MCF 10A (cell line): ENCODE measurements at regions of chr9 and their contacts with region 1.

Region 1: DNA sequence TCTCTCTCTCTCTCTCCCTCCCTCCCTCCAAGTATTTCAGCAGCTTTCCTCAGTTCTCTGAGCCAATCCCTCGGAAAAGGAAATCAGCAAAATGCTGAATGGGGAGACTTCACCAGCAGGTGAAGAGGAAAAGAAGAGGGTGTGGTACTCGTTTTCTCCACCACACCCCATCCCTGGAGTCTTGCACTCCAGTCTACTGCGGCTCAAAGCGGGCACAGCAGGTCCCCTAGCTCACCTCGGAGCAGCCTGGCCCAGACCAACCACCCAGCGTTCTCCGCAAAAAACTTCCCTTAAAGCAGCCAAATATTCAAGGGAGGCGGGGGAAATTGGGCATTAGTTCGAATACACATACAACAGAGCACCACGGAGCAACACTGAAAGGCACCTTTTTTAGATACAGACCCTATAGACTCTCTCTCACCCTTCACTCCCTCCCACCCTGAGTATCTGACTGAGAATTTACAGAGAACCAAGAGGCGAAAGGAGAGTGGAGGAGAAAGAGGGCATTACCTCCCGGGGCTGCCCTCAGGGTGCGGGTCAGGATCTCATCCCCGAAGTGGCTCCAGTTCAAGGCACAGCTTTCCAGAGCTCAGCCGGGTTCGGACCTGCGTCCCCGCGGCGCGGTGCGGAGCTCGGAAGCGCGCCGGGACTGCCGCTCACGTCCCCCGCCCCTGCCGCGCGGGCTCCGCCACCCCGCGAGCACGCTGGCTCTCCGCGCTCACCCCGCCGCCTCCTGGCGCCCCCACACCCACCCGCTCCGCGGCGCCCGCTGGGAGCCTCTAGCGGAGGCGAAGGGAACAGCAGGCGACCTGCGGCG is 1638.5 kb upstream of the C9orf72 start:
- DNase-seq: peak; percentile 63
- H3K4me3 Mint-ChIP-seq: peak overlapping the region; percentile 86
- H3K27ac Mint-ChIP-seq: no peak overlapping the region
- H3K4me1 Mint-ChIP-seq: peaks cover 13% of the 10 kb centered on the region
- H3K27me3 Mint-ChIP-seq: no peaks in the 10 kb centered on the region
- CTCF ChIP-seq: peak; percentile 94

Region 2: GRCh38 chr9:28073270-28073669 is 1138.5 kb before region 1 on chr9:
- CTCF ChIA-PET with region 1: interaction called, 5 read pairs
- POLR2A ChIA-PET with region 1: no interaction called
- intact Hi-C with region 1: loop called (anchors 10 kb)
- DNase-seq: peak; percentile 65
- H3K4me3 Mint-ChIP-seq: no peak overlapping the region
- H3K27ac Mint-ChIP-seq: no peak overlapping the region
- H3K4me1 Mint-ChIP-seq: no peaks in the 10 kb centered on the region
- H3K27me3 Mint-ChIP-seq: peaks cover 17% of the 10 kb centered on the region
- CTCF ChIP-seq: peak; percentile 75

Region 3: GRCh38 chr9:28600226-28600625 is 611.6 kb before region 1 on chr9:
- CTCF ChIA-PET with region 1: no interaction called
- POLR2A ChIA-PET with region 1: no interaction called
- intact Hi-C with region 1: loop called (anchors 10 kb)
- DNase-seq: no peak
- H3K4me3 Mint-ChIP-seq: no peak overlapping the region
- H3K27ac Mint-ChIP-seq: no peak overlapping the region
- H3K4me1 Mint-ChIP-seq: no peaks in the 10 kb centered on the region
- H3K27me3 Mint-ChIP-seq: no peaks in the 10 kb centered on the region
- CTCF ChIP-seq: no peak

Region 4: GRCh38 chr9:28774416-28775235 is 437.2 kb before region 1 on chr9:
- CTCF ChIA-PET with region 1: interaction called, 34 read pairs
- POLR2A ChIA-PET with region 1: interaction called, 9 read pairs
- intact Hi-C with region 1: loop called (anchors 1 kb)
- DNase-seq: peak; percentile 54
- H3K4me3 Mint-ChIP-seq: no peak overlapping the region
- H3K27ac Mint-ChIP-seq: no peak overlapping the region
- H3K4me1 Mint-ChIP-seq: peaks cover 6% of the 10 kb centered on the region
- H3K27me3 Mint-ChIP-seq: no peaks in the 10 kb centered on the region
- CTCF ChIP-seq: peak; percentile 61

Region 5: GRCh38 chr9:28853477-28853876 is 358.3 kb before region 1 on chr9:
- CTCF ChIA-PET with region 1: no interaction called
- POLR2A ChIA-PET with region 1: no interaction called
- intact Hi-C with region 1: no loop called
- DNase-seq: no peak
- H3K4me3 Mint-ChIP-seq: no peak overlapping the region
- H3K27ac Mint-ChIP-seq: no peak overlapping the region
- H3K4me1 Mint-ChIP-seq: no peaks in the 10 kb centered on the region
- H3K27me3 Mint-ChIP-seq: no peaks in the 10 kb centered on the region
- CTCF ChIP-seq: no peak

Region 6: DNA sequence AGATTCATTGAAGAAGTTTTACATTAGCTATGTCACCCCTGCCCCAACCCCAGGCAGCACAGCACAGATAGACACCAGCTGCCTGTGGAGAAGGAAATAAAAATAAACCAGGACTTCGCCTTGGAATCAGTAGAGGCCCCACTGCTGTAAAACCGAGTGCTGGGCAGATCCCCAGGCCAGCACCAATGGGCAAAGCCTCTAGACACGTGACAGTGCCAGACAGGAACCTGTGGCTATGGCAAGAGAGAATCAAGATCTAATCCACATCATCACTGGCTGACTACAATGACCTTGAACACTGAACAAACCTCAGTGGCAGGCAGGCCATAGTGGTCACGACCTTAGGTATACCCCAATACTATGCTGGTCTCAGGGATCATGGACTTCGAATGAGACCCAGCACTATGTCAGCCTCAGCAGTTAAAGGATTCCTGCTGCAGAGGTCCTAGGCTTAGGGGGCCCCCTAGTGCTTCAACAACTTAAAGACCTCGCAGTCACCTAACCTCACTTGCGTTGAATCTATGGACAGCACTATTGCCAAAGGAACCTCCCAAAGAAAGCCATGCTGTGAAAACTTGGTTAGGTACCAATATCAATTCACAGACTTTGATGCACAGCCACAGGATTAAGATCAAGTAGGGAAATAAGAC is 480.1 kb after region 1 on chr9:
- CTCF ChIA-PET with region 1: interaction called, 3 read pairs
- POLR2A ChIA-PET with region 1: no interaction called
- intact Hi-C with region 1: loop called (anchors 1 kb)
- DNase-seq: peak; percentile 73
- H3K4me3 Mint-ChIP-seq: no peak overlapping the region
- H3K27ac Mint-ChIP-seq: no peak overlapping the region
- H3K4me1 Mint-ChIP-seq: no peaks in the 10 kb centered on the region
- H3K27me3 Mint-ChIP-seq: no peaks in the 10 kb centered on the region
- CTCF ChIP-seq: peak; percentile 42

Region 7: DNA sequence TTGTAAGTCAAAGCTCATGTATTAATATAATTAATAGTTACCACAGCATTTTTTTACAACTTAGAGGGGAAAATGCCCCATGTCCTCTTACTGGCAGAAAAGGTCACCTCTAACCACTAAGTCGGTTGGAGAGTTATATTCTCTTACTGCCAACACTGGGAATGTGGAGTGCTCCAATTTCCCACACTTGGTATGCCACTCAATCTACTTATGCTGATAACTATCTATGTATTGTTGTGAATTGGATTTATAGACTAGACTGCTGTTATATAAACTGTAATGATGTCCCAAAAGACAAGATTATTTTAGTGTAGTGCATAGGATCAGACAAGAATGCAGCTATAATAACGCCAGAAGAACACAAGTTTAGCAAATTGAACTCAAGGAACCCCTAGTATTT is 746.7 kb after region 1 on chr9:
- CTCF ChIA-PET with region 1: interaction called, 10 read pairs
- POLR2A ChIA-PET with region 1: no interaction called
- intact Hi-C with region 1: loop called (anchors 10 kb)
- DNase-seq: no peak
- H3K4me3 Mint-ChIP-seq: no peak overlapping the region
- H3K27ac Mint-ChIP-seq: no peak overlapping the region
- H3K4me1 Mint-ChIP-seq: no peaks in the 10 kb centered on the region
- H3K27me3 Mint-ChIP-seq: no peaks in the 10 kb centered on the region
- CTCF ChIP-seq: no peak